ENCODE measurements at regions of chr19 and their contacts with region 1.

Region 1: GRCh38 chr19:38618590-38619360 is at the start of gene EIF3K:
- DNase-seq: peak; percentile 96 to 99 (median 98)

Region 2: DNA sequence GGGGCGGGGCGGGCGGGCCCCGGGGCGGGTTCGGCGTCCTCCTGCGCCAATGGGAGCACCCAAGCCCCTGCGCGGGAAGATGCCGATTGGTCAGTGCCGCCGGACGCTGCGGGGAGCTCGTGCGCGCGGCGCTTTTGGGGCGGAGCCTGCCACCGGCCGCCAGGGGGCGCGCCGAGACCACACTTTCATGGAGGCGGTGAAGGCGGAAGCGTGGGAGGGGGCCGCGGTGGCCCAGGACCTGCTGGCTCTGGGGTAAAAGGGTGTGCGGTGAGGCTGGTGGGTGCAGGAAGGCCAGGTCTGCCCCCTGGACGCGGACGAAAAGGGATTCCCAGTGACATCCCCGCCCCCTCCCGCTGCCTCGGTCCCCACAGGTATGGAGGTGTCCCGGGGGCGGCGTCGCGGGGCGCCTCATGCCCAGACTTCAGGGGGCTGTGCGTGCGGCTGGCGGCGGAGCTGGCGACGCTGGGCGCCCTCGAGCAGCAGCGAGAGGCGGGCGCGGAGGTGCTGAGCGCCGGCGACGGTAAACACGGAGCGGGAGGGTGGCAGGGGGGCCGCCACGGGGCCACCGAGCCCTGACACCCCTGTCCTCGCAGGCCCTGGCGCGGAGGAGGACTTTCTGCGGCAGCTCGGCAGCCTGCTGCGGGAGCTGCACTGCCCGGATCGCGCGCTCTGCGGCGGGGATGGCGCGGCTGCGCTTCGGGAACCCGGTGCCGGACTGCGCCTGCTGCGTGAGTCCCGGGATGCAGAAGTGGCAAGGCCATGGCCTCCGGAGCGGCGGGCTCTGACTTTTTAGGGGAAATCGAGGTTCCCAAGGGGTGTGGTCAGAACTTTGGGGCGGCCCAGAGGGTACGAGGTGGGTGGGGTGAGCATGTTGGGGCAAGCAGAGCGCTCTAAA is 215.6 kb before region 1 on chr19 and contains the start of gene FAM98C:
- intact Hi-C with region 1: loop called (anchors 5 kb)
- DNase-seq: peak; percentile 92 to 98 (median 97)

Region 3: DNA sequence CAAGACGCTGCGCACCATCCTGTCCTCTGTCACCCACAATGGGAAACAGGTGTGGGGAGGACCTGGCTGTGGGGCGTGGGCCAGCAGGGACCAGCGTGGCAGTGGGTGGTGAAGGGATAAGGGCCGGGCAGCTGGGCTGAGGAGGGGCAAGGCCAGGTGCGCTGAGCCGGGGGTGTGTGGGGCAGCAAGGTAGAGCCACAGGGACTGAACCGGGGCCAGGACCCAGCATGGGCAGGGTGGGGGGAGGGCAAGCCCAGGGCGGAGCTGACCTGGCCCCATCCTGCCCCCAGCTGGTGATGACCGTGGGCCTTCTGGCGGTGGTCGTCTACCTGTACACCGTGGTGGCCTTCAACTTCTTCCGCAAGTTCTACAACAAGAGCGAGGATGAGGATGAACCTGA is 38.7 kb before region 1 on chr19:
- intact Hi-C with region 1: no loop called
- DNase-seq: no peak

Region 4: GRCh38 chr19:38831142-38831605 is 212.4 kb after region 1 on chr19:
- intact Hi-C with region 1: loop called (anchors 10 kb)
- DNase-seq: peak in 35 of 42 donors; percentile 3 to 55 (median 28)